ENCODE measurements at regions of chr15 and their contacts with region 1.

Region 1: DNA sequence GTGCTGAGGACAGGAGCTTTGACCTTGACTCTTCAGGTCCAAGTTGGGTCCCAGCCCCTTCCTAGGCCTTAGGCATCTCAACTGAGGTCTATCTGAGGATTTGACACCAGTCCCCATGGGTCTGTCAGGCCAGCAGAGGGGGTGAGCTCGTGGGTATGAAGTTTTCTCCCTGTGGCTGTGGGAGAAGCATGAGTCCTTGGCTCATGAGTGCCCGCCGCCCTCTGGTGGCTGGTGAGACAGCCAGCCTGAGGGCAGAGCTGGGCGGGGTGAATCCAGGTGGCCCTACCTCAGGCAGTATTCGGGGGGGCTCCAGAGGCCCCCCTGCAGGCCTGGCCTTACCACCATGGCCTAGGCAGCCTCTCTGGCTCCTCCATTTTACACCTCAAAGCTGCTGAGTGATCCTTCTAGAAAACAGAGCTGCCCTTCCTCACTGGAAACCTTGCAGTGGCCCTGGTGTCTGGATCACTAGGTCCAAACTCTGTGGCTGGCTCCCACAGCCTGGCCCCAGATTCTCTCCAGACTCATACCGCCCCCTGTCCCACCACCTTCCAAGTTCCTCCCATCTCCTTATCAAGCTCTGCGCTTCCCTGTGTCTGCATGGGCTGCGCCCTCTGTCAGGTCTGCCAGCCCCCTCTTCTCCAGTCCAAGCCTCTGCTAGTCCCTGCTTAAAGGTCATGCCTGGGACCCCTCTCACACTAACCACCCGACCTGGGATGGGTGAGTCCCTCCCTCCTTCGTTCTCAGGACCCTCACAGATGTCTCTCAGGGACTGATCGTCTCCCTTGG is 16.1 kb downstream of the SH2D7 start:
- DNase-seq: peak; percentile 90
- H3K4me3 ChIP-seq: no peak overlapping the region
- H3K27ac ChIP-seq: no peak overlapping the region
- H3K4me1 ChIP-seq: no peaks in the 10 kb centered on the region
- CTCF ChIP-seq: peak; percentile 96

Region 2: GRCh38 chr15:77959432-77959879 is 149.0 kb before region 1 on chr15:
- CTCF ChIA-PET with region 1: no interaction called
- POLR2A ChIA-PET with region 1: interaction called, 3 read pairs
- intact Hi-C with region 1: loop called (anchors 1 kb)
- DNase-seq: peak; percentile 75
- H3K4me3 ChIP-seq: peak overlapping the region; percentile 34
- H3K27ac ChIP-seq: no peak overlapping the region
- H3K4me1 ChIP-seq: peaks cover 14% of the 10 kb centered on the region
- CTCF ChIP-seq: peak; percentile 93

Region 3: DNA sequence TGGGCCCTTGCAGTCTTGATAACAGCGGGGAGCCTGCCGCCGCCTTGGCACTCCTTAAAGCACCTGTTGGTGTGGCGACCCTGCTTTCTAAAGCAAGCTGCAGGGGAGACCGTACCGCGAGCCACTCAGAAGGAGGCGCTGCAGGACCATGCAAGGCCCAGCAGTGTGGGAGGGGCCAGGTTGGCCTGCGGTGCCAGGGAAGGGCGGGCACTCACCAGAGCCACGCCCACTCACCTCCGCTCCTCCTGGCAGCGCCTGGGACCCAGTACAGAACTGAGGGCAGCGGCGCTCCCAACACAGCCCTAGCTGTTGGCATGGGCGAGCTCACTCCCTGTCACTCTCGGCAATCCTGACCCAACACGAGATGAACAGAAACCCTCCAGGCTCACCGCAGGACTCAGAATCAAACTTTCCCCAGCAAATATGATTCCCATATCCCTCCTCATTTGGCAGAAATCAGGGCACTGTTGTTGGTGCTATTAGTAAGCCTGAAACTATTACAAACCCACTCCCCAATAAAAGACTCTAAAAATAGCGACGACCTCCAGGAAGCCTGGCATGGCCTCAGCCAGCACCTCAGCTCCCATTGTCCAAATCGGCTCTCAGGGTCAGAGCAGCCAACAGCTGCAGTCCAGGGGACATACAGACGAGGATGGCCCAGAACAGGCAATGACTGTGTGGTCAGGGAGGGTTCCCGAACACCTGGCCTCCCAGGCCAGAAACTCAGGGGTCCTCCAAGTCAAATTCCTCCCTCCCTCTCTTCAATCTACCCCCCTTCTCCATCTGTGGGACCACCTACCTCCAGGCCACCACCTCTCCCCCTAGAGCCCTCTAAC is 108.2 kb before region 1 on chr15:
- CTCF ChIA-PET with region 1: interaction called, 10 read pairs
- POLR2A ChIA-PET with region 1: no interaction called
- intact Hi-C with region 1: loop called (anchors 1 kb)
- DNase-seq: peak; percentile 90
- H3K4me3 ChIP-seq: no peak overlapping the region
- H3K27ac ChIP-seq: no peak overlapping the region
- H3K4me1 ChIP-seq: peaks cover 4% of the 10 kb centered on the region
- CTCF ChIP-seq: peak; percentile 84

Region 4: DNA sequence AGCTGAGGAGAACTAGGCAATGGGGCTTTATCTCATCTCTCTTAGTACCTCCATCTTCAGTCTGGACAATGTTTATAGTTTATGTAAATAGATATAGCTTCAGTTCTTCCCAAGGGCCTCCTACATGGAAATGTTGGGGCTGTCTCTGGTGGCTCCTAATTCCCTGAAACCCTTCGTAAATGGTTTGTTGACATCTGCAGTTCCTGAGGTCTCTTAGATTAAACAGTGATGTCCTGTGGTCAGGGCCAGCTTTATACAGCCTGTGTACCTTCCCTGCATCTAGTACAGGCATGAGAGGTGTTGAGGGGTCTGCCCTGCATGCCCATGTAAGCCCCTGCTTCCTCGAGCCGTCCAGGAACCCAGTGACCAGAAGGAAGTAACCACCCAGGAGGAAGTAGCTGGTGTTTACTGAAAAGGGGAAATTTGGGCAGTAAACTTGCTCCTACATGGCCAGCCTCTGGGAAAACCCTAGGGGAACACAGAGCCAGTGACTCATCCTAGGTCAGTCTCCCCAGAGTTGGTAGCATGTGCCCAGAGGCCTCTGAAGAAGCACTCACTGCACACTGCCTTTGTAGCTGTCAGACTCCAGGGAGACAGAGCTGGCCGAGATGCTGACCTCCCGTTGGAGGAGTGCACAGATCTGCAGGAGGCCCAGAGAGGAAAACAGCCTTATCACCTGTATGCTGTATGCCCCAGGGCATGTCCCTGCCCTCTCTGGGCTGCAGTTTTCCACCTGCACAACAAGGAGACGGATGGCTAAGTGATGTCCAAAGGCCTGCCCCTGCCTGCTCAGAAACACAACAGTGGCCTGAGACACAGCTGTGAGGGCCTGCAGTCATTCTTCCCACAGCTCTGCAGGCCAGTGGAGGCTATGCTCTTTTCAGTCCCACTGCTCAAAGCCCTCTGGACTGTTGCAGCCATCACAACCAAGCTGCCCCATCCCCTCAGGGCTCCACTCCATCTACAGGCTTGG is 26.1 kb before region 1 on chr15:
- CTCF ChIA-PET with region 1: no interaction called
- POLR2A ChIA-PET with region 1: no interaction called
- intact Hi-C with region 1: no loop called
- DNase-seq: no peak
- H3K4me3 ChIP-seq: no peak overlapping the region
- H3K27ac ChIP-seq: no peak overlapping the region
- H3K4me1 ChIP-seq: peaks cover 18% of the 10 kb centered on the region
- CTCF ChIP-seq: no peak

Region 5: DNA sequence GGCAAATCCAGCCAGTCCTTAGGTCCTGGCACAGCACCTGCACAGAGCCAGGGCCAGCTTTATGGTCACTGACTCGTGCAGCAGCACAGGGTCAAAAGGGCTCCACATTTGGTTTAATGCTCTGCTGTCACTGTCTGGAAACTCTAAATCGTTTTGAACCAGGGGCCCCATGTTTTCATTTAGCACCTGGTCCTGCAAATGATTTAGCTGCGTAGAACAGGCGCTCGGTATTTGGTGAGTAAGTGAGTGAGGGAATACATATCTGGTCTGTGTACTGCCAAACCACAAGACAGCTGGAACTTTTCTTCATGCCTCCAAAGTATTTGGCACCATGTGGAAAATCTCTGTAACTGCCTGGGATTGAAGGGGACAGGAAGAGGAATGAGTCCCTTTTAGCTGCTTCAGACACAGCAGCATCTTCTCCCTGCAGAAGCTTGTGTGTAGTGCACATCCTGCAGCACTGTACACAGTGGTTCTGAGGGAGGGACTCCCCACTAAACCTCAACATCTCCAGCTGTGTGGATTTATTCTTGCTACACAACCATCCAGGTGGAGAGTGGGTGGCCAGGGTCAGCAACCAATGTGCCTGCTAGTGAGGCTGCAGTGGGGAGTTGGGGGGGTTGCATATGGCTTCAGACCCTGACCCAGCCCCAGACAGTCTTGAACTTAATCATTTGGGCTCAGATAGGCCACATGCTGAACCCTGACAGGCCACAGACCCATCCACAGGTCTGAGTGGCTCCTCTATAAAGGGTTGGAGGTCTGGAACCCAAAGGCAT is 15.1 kb before region 1 on chr15:
- CTCF ChIA-PET with region 1: no interaction called
- POLR2A ChIA-PET with region 1: no interaction called
- intact Hi-C with region 1: no loop called
- DNase-seq: no peak
- H3K4me3 ChIP-seq: no peak overlapping the region
- H3K27ac ChIP-seq: no peak overlapping the region
- H3K4me1 ChIP-seq: peaks cover 1% of the 10 kb centered on the region
- CTCF ChIP-seq: no peak

Region 6: GRCh38 chr15:78155355-78155939 is 47.0 kb after region 1 on chr15:
- CTCF ChIA-PET with region 1: no interaction called
- POLR2A ChIA-PET with region 1: no interaction called
- intact Hi-C with region 1: no loop called
- DNase-seq: no peak
- H3K4me3 ChIP-seq: no peak overlapping the region
- H3K27ac ChIP-seq: no peak overlapping the region
- H3K4me1 ChIP-seq: peaks cover 27% of the 10 kb centered on the region
- CTCF ChIP-seq: no peak

Region 7: GRCh38 chr15:78241007-78241406 is 132.5 kb after region 1 on chr15:
- CTCF ChIA-PET with region 1: interaction called, 4 read pairs
- POLR2A ChIA-PET with region 1: interaction called, 4 read pairs
- intact Hi-C with region 1: loop called (anchors 1 kb)
- DNase-seq: peak; percentile 73
- H3K4me3 ChIP-seq: no peak overlapping the region
- H3K27ac ChIP-seq: no peak overlapping the region
- H3K4me1 ChIP-seq: no peaks in the 10 kb centered on the region
- CTCF ChIP-seq: peak; percentile 88

Region 8: GRCh38 chr15:78709263-78709882 is 600.9 kb after region 1 on chr15:
- CTCF ChIA-PET with region 1: no interaction called
- POLR2A ChIA-PET with region 1: no interaction called
- intact Hi-C with region 1: loop called (anchors 5 kb)
- DNase-seq: peak; percentile 70
- H3K4me3 ChIP-seq: no peak overlapping the region
- H3K27ac ChIP-seq: no peak overlapping the region
- H3K4me1 ChIP-seq: peaks cover 5% of the 10 kb centered on the region
- CTCF ChIP-seq: peak; percentile 90